Activated T-helper 2 cell treated with anti-CD3 and anti-CD28 coated beads, Interferon-gamma antibody, Interleukin-2, Interleukin-4, amounts not matched to agents 10 μg/mL and 5 μg/mL and 100 μg/mL, durations not matched to agents 14 hours and 24 hours and 36 hours (primary cell): ENCODE measurements at regions of chr1 and their contacts with region 1.

Region 1: DNA sequence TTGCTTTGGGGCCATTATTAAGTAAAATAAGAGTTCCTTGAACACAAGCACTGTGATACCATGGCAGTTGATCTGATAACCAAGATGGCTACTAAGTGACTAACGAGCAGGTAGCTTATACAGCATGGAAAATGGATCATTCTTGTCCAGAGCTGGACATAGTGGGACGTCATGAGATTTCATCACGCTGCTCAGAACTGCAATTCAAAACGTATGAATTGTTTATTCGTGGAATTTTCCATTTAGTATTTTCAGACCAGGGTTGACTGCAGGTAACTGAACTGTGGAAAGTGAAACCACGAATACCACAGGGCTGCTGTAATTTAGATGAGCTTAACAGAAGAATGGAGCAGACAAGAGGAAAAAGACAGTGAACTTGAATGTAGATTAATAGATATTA is 38.9 kb downstream of the CCDC18 start:
- DNase-seq: peak; percentile 33
- H3K4me3 Mint-ChIP-seq: peak overlapping the region; percentile 52
- H3K27ac Mint-ChIP-seq: peak overlapping the region; percentile 64
- H3K4me1 Mint-ChIP-seq: peaks cover 35% of the 10 kb centered on the region
- H3K27me3 Mint-ChIP-seq: no peaks in the 10 kb centered on the region

Region 2: GRCh38 chr1:93179886-93180722 is 39.3 kb before region 1 on chr1 and contains the start of gene TMED5:
- intact Hi-C with region 1: loop called (anchors 1 kb)
- DNase-seq: peak; percentile 97
- H3K4me3 Mint-ChIP-seq: peak within 1 kb of the TSS; percentile 97
- H3K27ac Mint-ChIP-seq: peak within 1 kb of the TSS; percentile 99
- H3K4me1 Mint-ChIP-seq: peaks cover 52% of the 10 kb centered on the region
- H3K27me3 Mint-ChIP-seq: no peaks in the 10 kb centered on the region
- total RNA-seq, gene TMED5: 58.6 and 60.4 TPM in 2 replicates